H1 (cell line): ENCODE measurements at regions of chr5 and their contacts with region 1.

Region 1: GRCh38 chr5:132238169-132238744 is 10.6 kb upstream of the P4HA2 start:
- DNase-seq: peak in 1 of 2 experiments; percentile 95
- H3K4me3 ChIP-seq: no peak overlapping the region
- H3K27ac ChIP-seq: no peak overlapping the region
- H3K4me1 ChIP-seq: no peaks in the 10 kb centered on the region
- H3K27me3 ChIP-seq: no peaks in the 10 kb centered on the region
- CTCF ChIP-seq: peak; percentile 64 to 85 (median 75)
- EP300 ChIP-seq: no peak
- POLR2A ChIP-seq: no peak
- RAD21 ChIP-seq: peak; percentile 76 to 83

Region 2: DNA sequence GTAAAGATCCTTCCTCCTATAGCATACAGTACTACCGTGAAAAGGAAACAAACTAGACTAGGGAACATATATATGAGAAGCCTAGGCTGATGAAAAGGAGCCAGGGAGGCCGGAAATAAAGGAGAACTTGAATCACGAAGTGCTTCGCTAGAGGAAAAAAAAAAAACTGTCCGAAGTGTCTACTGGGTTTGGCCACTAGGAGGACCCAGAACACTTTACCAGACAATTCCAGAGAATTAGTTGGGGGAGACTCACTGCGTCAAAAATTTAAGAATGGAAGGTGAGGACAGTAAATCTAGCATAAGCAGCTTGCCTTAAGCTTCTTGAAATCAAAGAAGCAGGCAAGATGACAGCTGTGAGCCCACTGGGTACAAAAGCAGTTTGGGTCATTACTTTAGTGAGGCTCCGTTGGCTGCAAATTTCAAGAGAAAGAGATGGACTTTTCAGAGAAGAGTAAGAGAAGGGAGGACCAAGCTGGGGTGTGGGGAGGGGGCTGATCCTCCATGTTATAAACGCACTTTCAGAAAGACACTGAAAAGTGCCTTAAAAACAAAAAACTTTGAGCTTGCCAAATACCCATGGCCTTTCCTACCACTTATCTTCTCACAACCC is 58.0 kb before region 1 on chr5:
- CTCF ChIA-PET with region 1: interaction called, 26 read pairs
- POLR2A ChIA-PET with region 1: interaction called, 3 read pairs
- DNase-seq: no peak
- H3K4me3 ChIP-seq: no peak overlapping the region
- H3K27ac ChIP-seq: no peak overlapping the region
- H3K4me1 ChIP-seq: peaks cover 0 to 7% (median 4%) of the 10 kb centered on the region in 4 experiments; a peak in 6 of 7 replicates
- H3K27me3 ChIP-seq: no peaks in the 10 kb centered on the region; a peak in 2 of 7 replicates
- CTCF ChIP-seq: peak in 2 of 3 experiments; percentile 73 to 76; a peak in 3 of 4 replicates
- EP300 ChIP-seq: no peak
- POLR2A ChIP-seq: no peak
- RAD21 ChIP-seq: peak; percentile 69 to 79

Region 3: DNA sequence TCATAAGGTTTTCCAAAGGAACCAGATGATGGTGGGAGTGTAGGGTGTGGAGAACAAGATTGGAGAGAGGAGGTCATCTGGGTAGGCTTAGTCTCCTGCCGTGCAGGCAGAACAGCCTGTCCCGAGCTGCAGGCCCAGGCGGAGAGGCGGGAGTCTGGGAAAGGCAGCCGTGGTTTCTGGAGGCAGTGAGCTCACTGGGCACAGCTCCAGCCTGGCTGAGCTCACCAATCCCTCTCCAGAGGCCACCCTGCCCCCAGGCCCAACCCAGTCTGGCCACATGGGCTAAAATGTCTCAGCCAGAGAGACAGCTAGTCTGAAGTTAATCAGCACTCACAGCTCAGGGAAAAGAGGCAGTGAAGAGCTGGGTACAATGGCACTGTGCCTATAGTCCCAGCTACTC is 22.9 kb before region 1 on chr5:
- CTCF ChIA-PET with region 1: interaction called, 29 read pairs
- POLR2A ChIA-PET with region 1: no interaction called
- DNase-seq: no peak
- H3K4me3 ChIP-seq: no peak overlapping the region
- H3K27ac ChIP-seq: no peak overlapping the region
- H3K4me1 ChIP-seq: no peaks in the 10 kb centered on the region
- H3K27me3 ChIP-seq: no peaks in the 10 kb centered on the region
- CTCF ChIP-seq: no peak
- EP300 ChIP-seq: no peak
- POLR2A ChIP-seq: no peak
- RAD21 ChIP-seq: no peak

Region 4: GRCh38 chr5:132260714-132261551 is 22.7 kb after region 1 on chr5:
- CTCF ChIA-PET with region 1: interaction called, 44 read pairs
- POLR2A ChIA-PET with region 1: no interaction called
- DNase-seq: peak in 1 of 2 experiments; percentile 23
- H3K4me3 ChIP-seq: no peak overlapping the region
- H3K27ac ChIP-seq: no peak overlapping the region
- H3K4me1 ChIP-seq: peaks cover 0 to 19% (median 6%) of the 10 kb centered on the region in 4 experiments; a peak in 6 of 7 replicates
- H3K27me3 ChIP-seq: peaks cover 0 to 10% (median 9%) of the 10 kb centered on the region in 4 experiments; a peak in 3 of 7 replicates
- CTCF ChIP-seq: no peak
- EP300 ChIP-seq: no peak
- POLR2A ChIP-seq: no peak
- RAD21 ChIP-seq: no peak

Region 5: GRCh38 chr5:132283423-132284043 is 45.3 kb after region 1 on chr5:
- CTCF ChIA-PET with region 1: interaction called, 24 read pairs
- POLR2A ChIA-PET with region 1: no interaction called
- DNase-seq: peak in 1 of 2 experiments; percentile 59
- H3K4me3 ChIP-seq: no peak overlapping the region
- H3K27ac ChIP-seq: no peak overlapping the region
- H3K4me1 ChIP-seq: peaks cover 0 to 2% (median under 1%) of the 10 kb centered on the region in 4 experiments; a peak in 2 of 7 replicates
- H3K27me3 ChIP-seq: no peaks in the 10 kb centered on the region
- CTCF ChIP-seq: peak; percentile 48 to 76 (median 64)
- EP300 ChIP-seq: no peak
- POLR2A ChIP-seq: no peak
- RAD21 ChIP-seq: peak; percentile 40 to 52; a peak in 3 of 4 replicates

Region 6: DNA sequence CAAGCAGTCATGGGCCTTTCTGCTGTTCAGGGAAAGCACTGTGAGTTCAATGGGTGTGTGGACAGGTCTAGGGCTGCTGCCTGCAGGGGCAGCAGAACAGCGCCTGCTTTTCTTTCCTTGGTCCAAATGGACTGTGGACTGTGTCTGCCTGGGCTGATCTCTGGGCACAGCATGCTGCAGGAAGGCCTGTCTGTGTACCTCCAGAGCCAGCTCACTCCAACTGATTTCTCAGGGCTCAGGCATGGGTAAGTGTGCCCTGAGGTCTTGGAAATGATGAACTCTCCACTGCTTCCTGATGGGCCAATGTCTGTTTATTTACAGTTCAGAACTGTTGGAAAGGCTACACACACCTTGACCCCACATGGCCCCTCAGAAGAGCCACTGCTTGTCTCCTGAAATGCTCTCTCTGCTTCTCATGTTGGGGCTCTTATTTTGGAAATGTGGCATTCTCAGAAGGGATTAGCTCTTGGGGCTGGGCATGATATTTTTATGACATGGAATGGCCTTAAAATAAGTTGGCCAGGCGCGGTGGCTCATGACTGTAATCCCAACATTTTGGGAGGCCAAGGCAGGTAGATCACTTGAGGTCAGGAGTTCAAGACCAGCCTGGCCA is 83.0 kb after region 1 on chr5:
- CTCF ChIA-PET with region 1: interaction called, 15 read pairs
- POLR2A ChIA-PET with region 1: no interaction called
- DNase-seq: no peak
- H3K4me3 ChIP-seq: no peak overlapping the region
- H3K27ac ChIP-seq: no peak overlapping the region
- H3K4me1 ChIP-seq: peaks cover 5 to 10% (median 7%) of the 10 kb centered on the region in 4 experiments
- H3K27me3 ChIP-seq: no peaks in the 10 kb centered on the region
- CTCF ChIP-seq: peak in 1 of 3 experiments; percentile 4; a peak in 1 of 4 replicates
- EP300 ChIP-seq: no peak
- POLR2A ChIP-seq: no peak
- RAD21 ChIP-seq: no peak